ENCODE measurements at regions of chr4 and their contacts with region 1.

Region 1: GRCh38 chr4:140359562-140360427 is 13.7 kb upstream of the SCOC start:
- DNase-seq: peak; percentile 93
- H3K4me3 ChIP-seq: no peak overlapping the region
- H3K27ac ChIP-seq: no peak overlapping the region
- H3K4me1 ChIP-seq: no peaks in the 10 kb centered on the region
- H3K27me3 ChIP-seq: no peaks in the 10 kb centered on the region
- CTCF ChIP-seq: peak; percentile 67 to 90 (median 69)
- POLR2A ChIP-seq: no peak

Region 2: DNA sequence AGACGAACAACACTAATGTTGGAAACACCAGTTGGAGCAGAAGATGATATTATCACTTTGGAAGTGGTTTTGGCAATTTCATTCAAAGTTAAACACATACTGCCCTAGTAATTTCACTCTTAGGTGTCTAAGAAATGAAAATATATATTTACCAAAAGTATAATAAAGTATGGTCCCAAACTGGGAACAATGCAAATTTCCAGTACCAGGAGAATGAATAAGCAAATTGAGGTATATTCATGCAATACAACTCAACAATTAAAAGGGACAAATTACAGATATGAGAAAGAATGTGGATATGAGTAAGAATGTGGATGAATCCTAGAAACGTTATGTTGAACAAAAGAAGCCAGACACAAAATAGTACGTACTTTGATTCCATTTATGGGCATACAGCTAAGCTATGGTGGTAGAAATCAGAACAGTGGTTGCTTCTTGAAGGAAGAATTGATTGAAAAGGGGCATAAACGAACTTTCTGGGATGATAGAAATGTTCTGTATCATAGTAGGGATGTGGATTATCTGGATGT is 174.2 kb after region 1 on chr4:
- intact Hi-C with region 1: no loop called
- DNase-seq: no peak
- H3K4me3 ChIP-seq: no peak overlapping the region
- H3K27ac ChIP-seq: no peak overlapping the region
- H3K4me1 ChIP-seq: no peaks in the 10 kb centered on the region
- H3K27me3 ChIP-seq: no peaks in the 10 kb centered on the region
- CTCF ChIP-seq: no peak
- POLR2A ChIP-seq: no peak

Region 3: DNA sequence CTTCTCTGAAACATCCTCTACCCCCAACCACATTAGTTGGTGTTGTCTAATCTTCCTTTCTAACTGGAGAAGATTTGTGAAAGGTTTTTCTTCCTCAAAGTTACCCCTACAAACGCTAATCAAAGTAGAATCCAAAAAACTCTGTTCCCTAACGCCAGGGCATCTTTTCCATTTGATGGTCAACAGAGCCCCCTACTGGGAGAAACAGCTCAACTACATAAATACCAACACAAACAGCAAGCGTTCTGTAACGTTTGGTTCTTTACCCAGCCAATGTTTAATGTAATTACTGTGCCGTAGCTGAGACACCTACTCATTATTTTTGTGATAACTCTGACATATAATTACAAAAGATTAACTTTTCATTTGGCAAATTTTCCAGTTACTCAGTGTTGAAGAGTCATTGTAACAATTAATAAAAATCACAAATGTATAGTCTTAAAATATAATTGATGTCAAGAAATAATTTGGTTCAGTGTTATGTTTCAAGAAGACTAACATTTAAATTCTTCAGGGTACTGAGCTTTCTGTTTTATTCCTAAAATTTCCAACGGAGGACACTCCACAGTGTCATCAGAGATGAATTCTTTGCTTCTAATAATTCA is 491.3 kb after region 1 on chr4:
- intact Hi-C with region 1: loop called (anchors 10 kb)
- DNase-seq: peak; percentile 65
- H3K4me3 ChIP-seq: no peak overlapping the region
- H3K27ac ChIP-seq: no peak overlapping the region
- H3K4me1 ChIP-seq: no peaks in the 10 kb centered on the region
- H3K27me3 ChIP-seq: no peaks in the 10 kb centered on the region
- CTCF ChIP-seq: peak; percentile 76 to 78 (median 78)
- POLR2A ChIP-seq: no peak